Naive thymus-derived CD8-positive, alpha-beta T cell (primary cell): ENCODE measurements at regions of chr17 and their contacts with region 1.

Region 1: DNA sequence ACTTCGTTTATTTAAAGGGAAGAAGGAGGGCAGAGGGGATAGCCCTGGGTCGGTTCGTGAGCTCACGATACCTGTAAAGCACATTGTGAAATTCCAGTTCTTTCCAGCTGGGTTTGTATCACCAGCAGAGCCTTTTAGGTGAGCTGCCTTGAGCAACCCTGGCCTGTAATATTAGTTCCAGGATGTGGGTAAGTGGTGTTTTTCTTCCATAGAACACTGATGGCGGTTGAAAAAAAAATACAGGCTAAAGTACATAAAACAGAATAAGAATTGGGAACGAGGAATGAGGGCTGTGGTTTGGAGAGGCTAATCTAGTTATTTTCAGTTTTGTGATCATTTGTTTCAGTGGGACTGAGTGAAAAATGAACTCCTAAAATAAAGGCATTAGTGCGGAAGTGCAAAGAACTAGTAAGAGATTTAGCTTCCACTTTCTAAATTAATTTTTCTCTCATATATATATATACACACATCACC is 20.6 kb downstream of the HS3ST3B1 start:
- DNase-seq: no peak
- ATAC-seq: no peak
- H3K4me3 Mint-ChIP-seq: peak overlapping the region in 6 of 10 donors; percentile 0 to 55 (median 30)
- H3K27ac Mint-ChIP-seq: peak overlapping the region in 5 of 10 donors; percentile 6 to 49 (median 33)
- H3K4me1 Mint-ChIP-seq: peaks cover 49 to 95% (median 86%) of the 10 kb centered on the region in 4 donors
- H3K27me3 Mint-ChIP-seq: no peaks in the 10 kb centered on the region

Region 2: GRCh38 chr17:14282726-14283125 is 38.8 kb before region 1 on chr17:
- POLR2A ChIA-PET with region 1: no interaction called
- DNase-seq: no peak
- ATAC-seq: no peak
- H3K4me3 Mint-ChIP-seq: no peak overlapping the region
- H3K27ac Mint-ChIP-seq: no peak overlapping the region
- H3K4me1 Mint-ChIP-seq: peaks cover 0 to 7% (median 0%) of the 10 kb centered on the region in 4 donors
- H3K27me3 Mint-ChIP-seq: peaks cover 5 to 29% (median 14%) of the 10 kb centered on the region in 5 donors

Region 3: GRCh38 chr17:14294876-14295275 is 26.6 kb before region 1 on chr17:
- POLR2A ChIA-PET with region 1: no interaction called
- DNase-seq: no peak
- ATAC-seq: no peak
- H3K4me3 Mint-ChIP-seq: no peak overlapping the region
- H3K27ac Mint-ChIP-seq: no peak overlapping the region
- H3K4me1 Mint-ChIP-seq: peaks cover 25 to 43% (median 43%) of the 10 kb centered on the region in 4 donors
- H3K27me3 Mint-ChIP-seq: peaks cover 25 to 80% (median 69%) of the 10 kb centered on the region in 5 donors

Region 4: GRCh38 chr17:14308965-14309879 is 12.3 kb before region 1 on chr17:
- POLR2A ChIA-PET with region 1: no interaction called
- DNase-seq: peak; percentile 84 to 92 (median 88)
- ATAC-seq: peak; percentile 99 to 100
- H3K4me3 Mint-ChIP-seq: peak overlapping the region; percentile 75 to 88 (median 83)
- H3K27ac Mint-ChIP-seq: peak overlapping the region; percentile 13 to 85 (median 67)
- H3K4me1 Mint-ChIP-seq: peaks cover 34 to 77% (median 75%) of the 10 kb centered on the region in 4 donors
- H3K27me3 Mint-ChIP-seq: no peaks in the 10 kb centered on the region

Region 5: DNA sequence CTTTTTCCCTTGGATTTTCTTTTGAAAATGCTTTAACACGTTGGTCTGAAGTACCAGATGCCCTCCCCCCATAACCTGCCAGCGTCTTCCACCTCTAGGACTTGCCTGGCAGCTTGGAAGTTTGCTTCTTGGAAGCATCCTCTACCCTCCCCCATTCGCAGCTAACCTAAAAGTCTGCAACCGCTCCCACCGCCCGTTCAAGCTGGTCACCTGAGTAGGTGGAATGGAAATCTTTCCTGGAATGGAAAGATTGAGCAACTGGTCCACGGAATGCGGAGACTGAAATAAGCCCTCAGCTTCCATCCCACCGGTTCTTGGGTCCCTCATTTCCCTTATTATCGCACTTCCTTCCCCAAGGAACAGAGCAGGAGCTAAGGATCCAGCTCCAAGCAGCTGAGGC is 10.8 kb after region 1 on chr17:
- POLR2A ChIA-PET with region 1: interaction called, 13 read pairs
- DNase-seq: no peak
- ATAC-seq: no peak
- H3K4me3 Mint-ChIP-seq: no peak overlapping the region
- H3K27ac Mint-ChIP-seq: peak overlapping the region in 7 of 10 donors; percentile 37 to 81 (median 48)
- H3K4me1 Mint-ChIP-seq: peaks cover 48 to 96% (median 95%) of the 10 kb centered on the region in 4 donors
- H3K27me3 Mint-ChIP-seq: no peaks in the 10 kb centered on the region